ENCODE measurements at regions of chr14 and their contacts with region 1.

Region 1: DNA sequence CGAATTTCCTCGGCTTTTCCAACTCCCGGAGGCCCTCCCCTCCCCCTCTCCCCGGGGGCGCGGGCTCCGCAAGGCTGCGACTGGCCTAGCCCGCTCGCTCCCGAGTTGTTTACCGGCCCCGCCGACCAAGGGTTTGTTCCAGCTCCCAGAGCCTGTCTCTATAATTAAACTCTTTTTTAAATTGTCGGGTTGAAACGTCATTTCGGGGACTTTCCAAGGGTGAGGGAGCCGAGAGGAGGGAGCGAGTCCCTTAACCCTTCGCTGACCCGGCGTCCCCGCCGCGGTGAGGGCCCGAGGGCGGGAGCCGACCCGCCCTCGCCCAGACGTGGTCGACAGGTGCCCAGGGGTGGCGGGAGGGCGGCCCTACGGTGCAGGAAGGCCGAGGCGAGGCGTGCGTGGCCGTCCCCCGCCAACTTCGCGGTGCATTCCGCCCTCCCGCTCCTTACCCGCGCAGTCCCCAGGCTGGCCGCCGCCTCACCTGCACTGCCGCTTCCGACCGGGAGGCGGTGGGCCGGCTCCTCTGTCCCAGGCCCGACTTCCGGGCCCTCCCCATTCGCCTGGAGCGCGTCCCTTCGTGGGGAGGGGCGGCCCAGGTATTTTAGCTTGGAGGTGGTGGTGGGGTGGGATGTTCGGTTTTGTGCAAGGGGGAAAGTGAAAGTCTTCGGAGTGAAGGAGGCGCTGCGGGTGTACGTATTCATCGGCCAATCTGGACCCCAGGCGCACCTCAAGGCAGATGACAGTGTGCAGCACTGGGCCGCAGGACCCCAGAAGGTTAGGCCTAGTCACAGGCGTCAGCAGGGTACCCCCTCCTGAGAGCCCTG is 2.9 kb upstream of the ZFP36L1 start:
- DNase-seq: peak; percentile 80 to 94
- ATAC-seq: peak; percentile 47 to 62 (median 49)
- H3K4me3 ChIP-seq: peak overlapping the region; percentile 96
- H3K4me3 Mint-ChIP-seq: peak overlapping the region; percentile 98
- H3K27ac ChIP-seq: peak overlapping the region; percentile 99
- H3K27ac Mint-ChIP-seq: peak overlapping the region; percentile 99
- H3K4me1 ChIP-seq: peaks cover 28% of the 10 kb centered on the region
- H3K4me1 Mint-ChIP-seq: peaks cover 41 to 43% of the 10 kb centered on the region in 2 donors
- H3K27me3 ChIP-seq: no peaks in the 10 kb centered on the region
- H3K27me3 Mint-ChIP-seq: no peaks in the 10 kb centered on the region
- CTCF ChIP-seq: peak; percentile 68

Region 2: DNA sequence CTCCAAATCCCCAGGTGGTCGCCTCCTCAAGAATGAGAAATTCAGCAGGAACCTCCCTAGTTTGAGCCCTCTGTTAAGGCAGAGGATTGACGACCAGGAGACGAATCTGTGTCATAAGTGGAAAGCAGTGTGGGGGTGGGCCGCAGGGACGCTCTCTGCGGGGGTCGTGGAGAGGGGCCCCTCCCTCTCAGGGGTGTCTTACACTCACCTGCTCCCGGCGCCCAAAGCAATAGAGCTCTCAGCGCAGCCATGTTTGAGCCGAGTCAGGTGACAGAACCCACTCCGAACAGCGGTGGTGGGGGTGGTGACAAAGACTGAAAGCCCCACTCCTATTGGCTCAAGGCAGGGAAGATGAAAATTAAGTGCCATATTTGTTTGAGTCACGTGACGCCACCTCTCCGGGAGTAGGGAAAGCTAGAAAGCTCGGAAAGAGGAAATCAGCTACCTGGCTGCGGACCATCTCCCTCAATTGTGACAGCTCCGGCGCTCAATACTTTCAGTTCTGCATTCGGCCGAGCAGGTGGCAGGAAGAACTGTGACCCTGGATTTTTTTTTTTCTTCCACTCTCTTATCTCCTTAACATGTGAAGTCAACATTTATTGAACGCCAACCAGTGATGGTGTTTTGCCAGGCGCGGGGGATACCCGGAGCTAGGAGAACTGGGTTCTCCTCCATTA is 979.3 kb before region 1 on chr14 and contains the start of gene ZFYVE26:
- intact Hi-C with region 1: loop called (anchors 10 kb)
- DNase-seq: peak; percentile 81 to 95
- ATAC-seq: peak; percentile 91 to 97 (median 94)
- H3K4me3 ChIP-seq: peak within 1 kb of the TSS; percentile 63
- H3K4me3 Mint-ChIP-seq: peak within 1 kb of the TSS; percentile 98
- H3K27ac ChIP-seq: peak within 1 kb of the TSS; percentile 59
- H3K27ac Mint-ChIP-seq: peak within 1 kb of the TSS; percentile 95 to 98
- H3K4me1 ChIP-seq: peaks cover 29% of the 10 kb centered on the region
- H3K4me1 Mint-ChIP-seq: peaks cover 36 to 50% of the 10 kb centered on the region in 2 donors
- H3K27me3 ChIP-seq: no peaks in the 10 kb centered on the region
- H3K27me3 Mint-ChIP-seq: peaks cover 0 to 4% of the 10 kb centered on the region in 2 donors
- CTCF ChIP-seq: no peak
- total RNA-seq, gene ZFYVE26: 31.0 to 45.9 (median 35.5) TPM

Region 3: GRCh38 chr14:68283378-68284123 is 512.3 kb before region 1 on chr14:
- intact Hi-C with region 1: loop called (anchors 1 kb)
- DNase-seq: peak; percentile 69 to 83
- ATAC-seq: peak; percentile 66 to 84 (median 83)
- H3K4me3 ChIP-seq: no peak overlapping the region
- H3K4me3 Mint-ChIP-seq: peak overlapping the region; percentile 68
- H3K27ac ChIP-seq: peak overlapping the region; percentile 91
- H3K27ac Mint-ChIP-seq: peak overlapping the region; percentile 86 to 96
- H3K4me1 ChIP-seq: peaks cover 61% of the 10 kb centered on the region
- H3K4me1 Mint-ChIP-seq: peaks cover 73 to 85% of the 10 kb centered on the region in 2 donors
- H3K27me3 ChIP-seq: no peaks in the 10 kb centered on the region
- H3K27me3 Mint-ChIP-seq: no peaks in the 10 kb centered on the region
- CTCF ChIP-seq: no peak

Region 4: GRCh38 chr14:68695326-68695768 is 100.5 kb before region 1 on chr14:
- intact Hi-C with region 1: loop called (anchors 2 kb)
- DNase-seq: peak; percentile 33 to 45
- ATAC-seq: peak; percentile 90 to 97 (median 90)
- H3K4me3 ChIP-seq: no peak overlapping the region
- H3K4me3 Mint-ChIP-seq: peak overlapping the region; percentile 58
- H3K27ac ChIP-seq: peak overlapping the region; percentile 34
- H3K27ac Mint-ChIP-seq: peak overlapping the region; percentile 87 to 92
- H3K4me1 ChIP-seq: peaks cover 28% of the 10 kb centered on the region
- H3K4me1 Mint-ChIP-seq: peaks cover 35 to 45% of the 10 kb centered on the region in 2 donors
- H3K27me3 ChIP-seq: no peaks in the 10 kb centered on the region
- H3K27me3 Mint-ChIP-seq: peaks cover 0 to 2% of the 10 kb centered on the region in 2 donors
- CTCF ChIP-seq: no peak

Region 5: DNA sequence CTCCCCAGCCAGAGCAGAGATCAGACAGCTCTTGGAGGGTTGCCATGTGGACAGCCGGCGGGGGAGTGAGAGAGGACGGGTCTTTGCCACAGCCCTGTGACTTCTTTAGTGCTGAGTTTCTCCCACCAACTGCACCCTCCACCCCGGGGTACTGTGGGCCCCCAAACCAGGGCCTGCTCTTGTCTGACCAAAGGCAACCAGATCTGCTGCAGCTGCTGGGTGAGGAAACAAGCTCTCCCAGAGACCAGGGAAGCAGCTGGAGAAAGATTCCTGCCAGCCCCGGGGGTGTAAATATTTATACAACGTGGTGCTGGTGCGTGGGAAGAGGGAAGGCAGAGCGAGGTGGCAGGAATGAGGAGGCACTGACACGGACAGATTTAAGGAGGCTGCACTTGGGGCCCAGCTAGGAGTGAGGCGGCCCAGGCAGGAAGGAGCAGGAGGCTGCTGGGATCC is 11.4 kb after region 1 on chr14:
- intact Hi-C with region 1: no loop called
- DNase-seq: peak in 1 of 2 donors; percentile 41
- ATAC-seq: no peak
- H3K4me3 ChIP-seq: no peak overlapping the region
- H3K4me3 Mint-ChIP-seq: no peak overlapping the region
- H3K27ac ChIP-seq: peak overlapping the region; percentile 65
- H3K27ac Mint-ChIP-seq: no peak overlapping the region
- H3K4me1 ChIP-seq: peaks cover 22% of the 10 kb centered on the region
- H3K4me1 Mint-ChIP-seq: peaks cover 6 to 24% of the 10 kb centered on the region in 2 donors
- H3K27me3 ChIP-seq: no peaks in the 10 kb centered on the region
- H3K27me3 Mint-ChIP-seq: no peaks in the 10 kb centered on the region
- CTCF ChIP-seq: no peak

Region 6: DNA sequence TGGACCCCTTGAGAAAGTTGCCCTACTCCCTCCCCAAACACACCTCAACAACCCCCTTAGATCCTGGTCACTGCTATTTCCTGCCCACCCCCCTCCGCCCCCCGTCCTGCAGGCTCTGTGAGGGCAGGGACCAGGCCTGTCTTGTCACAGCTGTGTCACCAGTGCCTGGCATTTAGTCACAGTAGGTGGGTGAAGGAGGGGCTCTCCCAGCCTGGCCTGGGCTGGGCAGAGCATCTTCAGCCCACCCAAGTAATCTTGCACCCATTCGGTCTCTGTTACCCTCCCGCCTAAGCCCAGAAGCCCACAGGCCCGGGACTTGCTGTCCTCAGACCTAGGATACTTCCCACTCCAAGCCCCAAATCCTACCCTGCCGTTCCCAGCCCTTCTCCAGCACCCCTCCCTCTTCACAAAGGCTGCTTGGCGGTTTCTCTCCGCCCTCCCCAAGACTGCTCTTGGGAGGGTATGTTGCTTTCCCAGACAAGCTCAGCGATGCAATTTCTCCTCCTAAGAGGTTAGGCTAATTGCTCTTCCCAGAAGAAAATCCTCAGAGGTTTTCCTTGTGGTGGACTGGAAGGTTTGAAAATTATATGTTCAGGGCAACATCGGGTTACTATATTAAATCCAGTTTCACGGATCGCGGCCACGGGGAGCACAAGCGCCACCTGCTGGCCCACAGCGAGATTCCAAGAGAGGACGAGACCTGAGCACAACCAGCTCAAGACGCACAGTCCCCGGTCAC is 47.8 kb after region 1 on chr14:
- intact Hi-C with region 1: loop called (anchors 10 kb)
- DNase-seq: peak; percentile 75 to 86
- ATAC-seq: peak; percentile 64 to 73 (median 71)
- H3K4me3 ChIP-seq: no peak overlapping the region
- H3K4me3 Mint-ChIP-seq: peak overlapping the region; percentile 71
- H3K27ac ChIP-seq: no peak overlapping the region
- H3K27ac Mint-ChIP-seq: peak overlapping the region; percentile 31 to 86
- H3K4me1 ChIP-seq: peaks cover 32% of the 10 kb centered on the region
- H3K4me1 Mint-ChIP-seq: peaks cover 48 to 50% of the 10 kb centered on the region in 2 donors
- H3K27me3 ChIP-seq: no peaks in the 10 kb centered on the region
- H3K27me3 Mint-ChIP-seq: peaks cover 0 to 7% of the 10 kb centered on the region in 2 donors
- CTCF ChIP-seq: peak; percentile 93

Region 7: GRCh38 chr14:68884031-68885030 is 88.5 kb after region 1 on chr14:
- intact Hi-C with region 1: no loop called
- DNase-seq: no peak
- ATAC-seq: no peak
- H3K4me3 ChIP-seq: no peak overlapping the region
- H3K4me3 Mint-ChIP-seq: no peak overlapping the region
- H3K27ac ChIP-seq: no peak overlapping the region
- H3K27ac Mint-ChIP-seq: no peak overlapping the region
- H3K4me1 ChIP-seq: no peaks in the 10 kb centered on the region
- H3K4me1 Mint-ChIP-seq: no peaks in the 10 kb centered on the region
- H3K27me3 ChIP-seq: no peaks in the 10 kb centered on the region
- H3K27me3 Mint-ChIP-seq: no peaks in the 10 kb centered on the region
- CTCF ChIP-seq: no peak

Measured in natural killer cell (primary cell).